GM12878 (cell line): ENCODE measurements at regions of chr5 and their contacts with region 1.

Region 1: GRCh38 chr5:9361835-9362234 is 184.0 kb downstream of the SEMA5A start:
- DNase-seq: peak; percentile 96
- ATAC-seq: peak; percentile 89
- H3K4me3 ChIP-seq: no peak overlapping the region
- H3K27ac ChIP-seq: peak overlapping the region; percentile 80
- H3K4me1 ChIP-seq: peaks cover 25% of the 10 kb centered on the region
- H3K27me3 ChIP-seq: no peaks in the 10 kb centered on the region; a peak in 1 of 4 replicates
- CTCF ChIP-seq: peak; percentile 81 to 86 (median 82)
- EP300 ChIP-seq: no peak
- POLR2A ChIP-seq: no peak
- RAD21 ChIP-seq: peak; percentile 91

Region 2: DNA sequence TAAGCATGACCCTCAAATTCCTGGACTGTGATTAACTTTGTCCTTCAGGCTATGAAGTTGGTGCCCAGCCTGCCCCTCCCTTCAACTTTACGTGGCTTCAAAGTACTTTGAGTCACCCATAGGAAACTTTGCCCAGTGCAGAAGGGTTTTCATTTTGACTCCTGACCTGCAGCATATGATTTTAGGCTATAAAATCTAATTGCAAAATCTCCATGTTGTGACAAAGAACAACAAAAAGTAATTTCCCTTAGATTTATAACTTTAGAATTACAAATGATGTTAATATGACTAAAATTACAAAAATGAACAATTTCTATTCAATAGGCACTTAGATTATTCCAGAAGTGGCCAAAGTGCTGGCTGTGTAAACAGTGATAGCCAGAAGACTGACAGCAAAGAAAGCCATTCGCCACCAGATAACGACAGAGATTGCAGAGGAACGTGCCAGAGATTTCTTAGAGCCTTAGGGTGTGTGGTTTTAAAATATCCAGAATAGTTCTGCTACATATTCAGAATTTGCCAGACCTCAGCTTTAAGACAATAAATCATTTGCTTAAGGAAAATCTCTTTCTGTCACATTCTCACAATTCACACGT is 13.3 kb before region 1 on chr5:
- CTCF ChIA-PET with region 1: no interaction called
- POLR2A ChIA-PET with region 1: no interaction called
- RAD21 ChIA-PET with region 1: no interaction called
- SMC1A ChIA-PET with region 1: no interaction called
- in situ Hi-C with region 1: no loop called
- intact Hi-C with region 1: no loop called
- DNase-seq: no peak
- ATAC-seq: no peak
- H3K4me3 ChIP-seq: no peak overlapping the region
- H3K27ac ChIP-seq: no peak overlapping the region
- H3K4me1 ChIP-seq: no peaks in the 10 kb centered on the region
- H3K27me3 ChIP-seq: no peaks in the 10 kb centered on the region; a peak in 1 of 4 replicates
- CTCF ChIP-seq: no peak
- EP300 ChIP-seq: no peak
- POLR2A ChIP-seq: no peak
- RAD21 ChIP-seq: no peak

Region 3: GRCh38 chr5:9381464-9381863 is 19.6 kb after region 1 on chr5:
- CTCF ChIA-PET with region 1: interaction called, 3 read pairs
- POLR2A ChIA-PET with region 1: no interaction called
- RAD21 ChIA-PET with region 1: no interaction called
- SMC1A ChIA-PET with region 1: no interaction called
- in situ Hi-C with region 1: no loop called
- intact Hi-C with region 1: loop called (anchors 1 kb)
- DNase-seq: peak; percentile 68
- ATAC-seq: peak; percentile 96
- H3K4me3 ChIP-seq: no peak overlapping the region
- H3K27ac ChIP-seq: no peak overlapping the region
- H3K4me1 ChIP-seq: peaks cover 12% of the 10 kb centered on the region
- H3K27me3 ChIP-seq: no peaks in the 10 kb centered on the region
- CTCF ChIP-seq: no peak
- EP300 ChIP-seq: no peak
- POLR2A ChIP-seq: no peak
- RAD21 ChIP-seq: no peak

Region 4: DNA sequence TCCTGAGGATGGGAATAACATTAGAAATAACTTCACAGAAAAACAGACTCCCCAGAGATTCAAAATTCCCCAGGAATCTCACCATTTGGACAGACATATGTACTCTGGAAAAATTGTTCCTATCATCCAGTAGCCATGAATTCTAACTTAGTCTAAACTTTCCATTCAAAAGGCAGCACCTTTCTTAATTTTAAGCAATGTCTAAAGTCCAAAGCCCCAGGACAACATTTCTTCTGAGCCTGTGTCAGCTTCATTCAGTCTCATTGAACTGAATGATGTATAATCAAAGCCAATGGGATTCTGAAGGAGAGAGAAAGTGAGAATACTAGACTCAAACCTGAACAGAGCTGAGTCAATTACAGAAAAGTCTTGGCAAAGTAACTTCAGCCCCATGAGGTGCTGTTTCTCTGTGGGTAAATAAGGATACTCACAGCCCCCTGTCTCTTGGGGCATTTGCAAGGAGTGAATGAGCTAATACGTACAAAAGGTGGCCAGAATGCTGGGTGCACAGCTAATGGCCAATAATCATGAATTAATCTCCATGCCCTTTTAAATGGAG is 43.4 kb after region 1 on chr5:
- CTCF ChIA-PET with region 1: no interaction called
- POLR2A ChIA-PET with region 1: no interaction called
- RAD21 ChIA-PET with region 1: no interaction called
- SMC1A ChIA-PET with region 1: no interaction called
- in situ Hi-C with region 1: no loop called
- intact Hi-C with region 1: loop called (anchors 1 kb)
- DNase-seq: peak; percentile 54
- ATAC-seq: peak; percentile 72
- H3K4me3 ChIP-seq: no peak overlapping the region
- H3K27ac ChIP-seq: no peak overlapping the region
- H3K4me1 ChIP-seq: peaks cover 2% of the 10 kb centered on the region; the same call in 1 of the 2 replicates
- H3K27me3 ChIP-seq: no peaks in the 10 kb centered on the region; a peak in 2 of 4 replicates
- CTCF ChIP-seq: no peak
- EP300 ChIP-seq: no peak
- POLR2A ChIP-seq: no peak
- RAD21 ChIP-seq: no peak

Region 5: GRCh38 chr5:9498541-9499497 is 137.0 kb after region 1 on chr5:
- CTCF ChIA-PET with region 1: no interaction called
- POLR2A ChIA-PET with region 1: no interaction called
- RAD21 ChIA-PET with region 1: interaction called, 3 read pairs
- SMC1A ChIA-PET with region 1: interaction called, 4 read pairs
- in situ Hi-C with region 1: no loop called
- intact Hi-C with region 1: loop called (anchors 1 kb)
- DNase-seq: no peak
- ATAC-seq: peak; percentile 83
- H3K4me3 ChIP-seq: no peak overlapping the region
- H3K27ac ChIP-seq: no peak overlapping the region
- H3K4me1 ChIP-seq: peaks cover 4% of the 10 kb centered on the region; the same call in 1 of the 2 replicates
- H3K27me3 ChIP-seq: no peaks in the 10 kb centered on the region
- CTCF ChIP-seq: peak; percentile 39 to 42 (median 39); a peak in 5 of 6 replicates
- EP300 ChIP-seq: no peak
- POLR2A ChIP-seq: no peak
- RAD21 ChIP-seq: peak; percentile 68

Region 6: DNA sequence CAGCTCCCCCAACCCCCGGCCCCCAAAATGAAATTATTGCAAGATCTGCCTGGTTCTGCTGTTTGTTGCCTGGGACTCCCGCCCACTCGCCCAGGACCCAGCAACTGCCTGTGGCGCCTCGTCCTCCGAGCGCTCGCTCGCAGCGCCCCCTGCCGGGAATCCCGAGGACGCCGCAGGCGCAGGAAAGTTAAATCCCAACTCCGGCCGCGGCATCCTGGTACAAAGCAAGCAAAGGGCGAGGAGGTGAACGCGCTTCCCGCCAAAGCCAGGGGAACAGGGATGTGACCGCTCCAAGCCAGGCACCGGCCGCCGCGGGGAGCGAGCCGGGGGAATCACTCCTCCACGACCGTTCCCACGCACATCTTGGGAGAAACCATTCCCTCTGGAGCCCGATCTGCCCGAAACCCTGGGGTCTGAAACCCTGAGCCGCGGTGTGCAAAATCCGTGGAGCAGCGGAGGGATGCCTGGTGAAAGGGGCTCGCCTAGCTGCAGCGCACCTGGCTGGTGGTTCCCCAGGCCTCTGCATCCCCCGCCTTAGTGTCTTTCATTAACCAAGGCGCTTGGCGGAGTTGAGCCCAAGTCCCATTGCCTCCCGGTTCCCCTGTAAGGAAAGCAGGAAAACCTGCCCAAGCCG is 182.8 kb after region 1 on chr5:
- CTCF ChIA-PET with region 1: interaction called, 21 read pairs
- POLR2A ChIA-PET with region 1: no interaction called
- RAD21 ChIA-PET with region 1: interaction called, 5 read pairs
- SMC1A ChIA-PET with region 1: interaction called, 4 read pairs
- in situ Hi-C with region 1: loop called (anchors 5 kb)
- intact Hi-C with region 1: loop called (anchors 1 kb)
- DNase-seq: no peak
- ATAC-seq: peak; percentile 97
- H3K4me3 ChIP-seq: peak overlapping the region; percentile 46
- H3K27ac ChIP-seq: no peak overlapping the region
- H3K4me1 ChIP-seq: peaks cover 3% of the 10 kb centered on the region; the same call in 1 of the 2 replicates
- H3K27me3 ChIP-seq: peaks cover 1 to 9% of the 10 kb centered on the region in 2 experiments
- CTCF ChIP-seq: peak; percentile 77 to 89 (median 78)
- EP300 ChIP-seq: no peak
- POLR2A ChIP-seq: no peak
- RAD21 ChIP-seq: peak; percentile 90